ENCODE measurements at regions of chr11 and their contacts with region 1.

Region 1: DNA sequence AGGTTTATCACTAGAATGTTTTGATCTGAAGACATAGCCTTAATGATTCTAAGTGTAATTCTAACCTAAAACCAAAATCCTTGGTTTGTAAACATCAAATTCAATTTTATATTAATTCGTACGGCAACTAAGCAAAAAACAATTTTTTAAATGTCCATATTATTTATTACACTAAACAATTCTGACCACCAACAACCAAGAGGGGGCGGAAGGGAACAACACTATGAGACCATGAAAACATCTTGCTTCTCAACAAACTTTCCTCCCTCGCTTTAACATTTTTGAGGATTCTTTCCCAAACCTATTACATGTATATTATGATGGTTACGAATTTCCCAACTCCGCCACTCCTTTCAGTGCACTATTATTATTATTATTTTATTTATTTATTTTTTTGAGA is 6.5 kb upstream of the UCP2 start:
- DNase-seq: no peak
- H3K4me3 ChIP-seq: no peak overlapping the region
- H3K27ac ChIP-seq: no peak overlapping the region
- H3K4me1 ChIP-seq: no peaks in the 10 kb centered on the region
- H3K27me3 ChIP-seq: no peaks in the 10 kb centered on the region
- CTCF ChIP-seq: peak in 1 of 2 donors; percentile 28

Region 2: DNA sequence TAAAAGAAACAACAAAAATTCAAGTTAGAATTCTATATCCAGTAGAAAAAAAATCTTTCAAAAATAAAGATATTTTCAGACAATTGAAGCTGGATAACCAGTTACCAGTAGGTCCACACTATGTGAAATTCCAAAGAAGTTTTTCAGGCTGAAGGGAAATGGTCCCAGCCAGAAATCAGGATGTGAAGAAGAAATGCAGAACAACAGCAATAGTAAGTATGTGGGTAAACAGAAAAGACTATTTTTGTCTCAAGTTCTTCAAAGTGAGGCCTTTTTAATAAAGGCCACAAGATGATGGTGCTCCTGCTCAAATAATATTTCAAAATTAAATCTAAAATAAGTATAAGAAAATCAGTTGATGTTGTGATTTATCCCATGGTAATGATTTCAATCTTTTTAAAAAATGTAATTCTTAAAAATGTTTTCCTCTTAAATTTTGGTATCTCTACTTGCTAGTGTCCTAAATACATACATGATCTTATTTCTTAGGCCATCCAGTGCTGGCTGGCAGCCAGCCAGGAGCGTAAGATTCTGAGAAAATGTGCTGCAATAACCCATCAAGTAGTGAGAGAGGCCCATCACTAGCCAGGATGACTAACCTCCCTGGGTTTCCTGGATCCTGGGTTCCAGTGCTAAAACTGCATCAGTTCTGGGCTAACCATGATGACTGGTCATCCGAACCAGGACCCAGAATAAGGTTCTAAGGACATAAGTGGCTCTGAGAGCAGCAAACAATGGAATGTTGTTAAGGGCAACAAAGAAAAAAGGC is 35.3 kb after region 1 on chr11:
- CTCF ChIA-PET with region 1: no interaction called
- dilution Hi-C with region 1: no loop called
- in situ Hi-C with region 1: no loop called
- intact Hi-C with region 1: no loop called
- DNase-seq: peak; percentile 62
- H3K4me3 ChIP-seq: no peak overlapping the region
- H3K27ac ChIP-seq: peak overlapping the region; percentile 16
- H3K4me1 ChIP-seq: peaks cover 38% of the 10 kb centered on the region
- H3K27me3 ChIP-seq: no peaks in the 10 kb centered on the region
- CTCF ChIP-seq: no peak

Region 3: DNA sequence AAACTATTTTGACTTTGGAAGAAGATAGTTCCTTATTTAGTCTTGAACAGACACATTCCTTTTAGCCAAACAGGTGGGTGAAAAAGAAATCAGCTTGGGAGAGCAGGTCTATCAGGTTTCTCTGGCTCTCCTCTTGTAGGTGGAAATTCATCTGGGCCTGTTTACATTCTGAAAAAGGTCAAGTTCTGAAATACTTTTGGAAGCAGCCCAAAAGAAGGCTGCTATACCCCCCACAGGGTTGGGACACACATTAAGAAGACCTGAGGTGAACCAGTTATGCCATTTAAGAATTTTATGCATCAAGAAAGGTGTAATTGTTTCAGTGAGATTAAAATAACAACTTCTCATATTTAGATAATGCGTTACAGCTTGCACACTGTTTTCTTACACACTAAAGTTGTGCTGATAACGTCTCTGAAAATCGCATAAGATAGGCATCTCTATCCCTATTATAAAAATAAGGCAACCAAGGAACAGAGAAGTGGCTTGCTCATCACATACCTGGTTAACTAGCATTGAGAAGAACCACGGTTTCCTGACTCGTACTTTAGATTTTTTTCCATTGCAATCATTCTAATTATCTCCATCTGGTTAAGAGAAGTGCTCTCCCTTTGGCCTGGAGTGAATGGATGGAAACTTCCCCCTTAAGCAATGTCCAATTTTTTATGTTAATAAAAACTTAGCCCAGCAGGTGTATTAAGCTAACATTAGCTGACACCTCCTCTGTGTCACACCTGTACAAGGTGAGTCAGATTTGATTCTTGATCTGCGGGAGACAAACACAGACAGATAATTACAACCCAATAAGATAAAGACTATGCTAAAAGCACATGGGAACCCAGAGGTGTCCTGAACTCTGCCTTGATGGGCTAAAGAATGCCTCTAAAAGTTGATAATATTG is 80.2 kb after region 1 on chr11:
- CTCF ChIA-PET with region 1: no interaction called
- dilution Hi-C with region 1: loop called (anchors 5 kb)
- in situ Hi-C with region 1: no loop called
- intact Hi-C with region 1: no loop called
- DNase-seq: peak; percentile 9
- H3K4me3 ChIP-seq: no peak overlapping the region
- H3K27ac ChIP-seq: no peak overlapping the region
- H3K4me1 ChIP-seq: no peaks in the 10 kb centered on the region
- H3K27me3 ChIP-seq: no peaks in the 10 kb centered on the region
- CTCF ChIP-seq: no peak